ENCODE measurements at regions of chr14 and their contacts with region 1.

Region 1: DNA sequence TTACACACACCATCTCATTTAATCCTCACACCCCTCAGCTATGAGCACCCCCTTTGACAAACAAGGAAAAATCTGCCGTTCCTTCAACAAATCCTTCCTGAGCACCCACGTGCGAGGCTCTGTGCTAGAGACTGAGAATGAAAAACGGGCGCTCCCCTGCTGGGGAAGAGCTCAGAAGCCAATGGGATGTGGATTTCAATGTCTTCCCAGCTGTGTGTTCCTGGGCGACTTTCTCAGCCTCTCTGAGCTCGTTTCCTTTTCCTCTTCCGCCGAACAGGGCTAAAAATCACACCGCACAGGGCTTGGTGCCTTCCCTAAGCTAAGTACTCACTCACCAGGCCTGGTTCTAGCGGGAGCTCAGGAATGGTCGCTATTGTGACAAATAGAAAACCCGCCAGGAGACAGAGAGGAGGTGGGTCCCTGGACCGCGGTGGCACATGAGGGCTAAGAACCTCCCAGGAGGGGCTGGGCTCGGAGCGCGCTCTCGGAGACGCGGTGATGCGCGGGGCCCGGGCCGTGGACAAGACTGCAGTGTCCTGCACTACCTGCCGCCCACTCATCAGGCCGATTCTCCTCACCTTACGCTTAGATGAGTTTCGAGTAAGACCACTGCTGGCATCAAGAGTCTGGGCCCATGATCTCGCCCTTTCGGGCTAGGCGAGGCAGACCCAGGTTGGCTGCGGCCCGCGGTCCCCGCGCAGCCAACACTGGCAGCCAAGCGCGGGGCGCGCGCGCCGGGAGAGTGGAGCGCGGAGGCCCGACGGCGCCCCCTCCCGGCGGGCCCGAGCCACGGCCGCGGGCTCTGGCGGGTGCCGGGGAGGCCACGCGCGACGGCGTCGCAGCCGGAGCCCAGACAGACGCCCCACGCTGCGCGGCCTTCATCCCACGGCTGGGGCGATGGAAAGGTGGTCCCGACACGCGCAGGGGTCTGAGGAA is 17.0 kb downstream of the ZDHHC22 start:
- DNase-seq: peak; percentile 61
- ATAC-seq: peak; percentile 75
- H3K4me3 Mint-ChIP-seq: peak overlapping the region; percentile 69
- H3K27ac Mint-ChIP-seq: peak overlapping the region; percentile 58
- H3K4me1 Mint-ChIP-seq: peaks cover 36% of the 10 kb centered on the region
- H3K27me3 Mint-ChIP-seq: peaks cover 21% of the 10 kb centered on the region
- CTCF ChIP-seq: peak; percentile 81

Region 2: GRCh38 chr14:77097700-77098528 is 26.7 kb before region 1 on chr14 and contains the start of gene CIPC:
- CTCF ChIA-PET with region 1: interaction called, 93 read pairs
- POLR2A ChIA-PET with region 1: interaction called, 10 read pairs
- intact Hi-C with region 1: no loop called
- DNase-seq: peak; percentile 99
- ATAC-seq: peak; percentile 94
- H3K4me3 Mint-ChIP-seq: peak within 1 kb of the TSS; percentile 93
- H3K27ac Mint-ChIP-seq: peak within 1 kb of the TSS; percentile 99
- H3K4me1 Mint-ChIP-seq: peaks cover 35% of the 10 kb centered on the region
- H3K27me3 Mint-ChIP-seq: no peaks in the 10 kb centered on the region
- CTCF ChIP-seq: no peak
- total RNA-seq, gene CIPC: 8.8 to 9.6 TPM

Region 3: GRCh38 chr14:77111043-77111442 is 13.6 kb before region 1 on chr14:
- CTCF ChIA-PET with region 1: interaction called, 23 read pairs
- POLR2A ChIA-PET with region 1: interaction called, 5 read pairs
- intact Hi-C with region 1: no loop called
- DNase-seq: no peak
- ATAC-seq: no peak
- H3K4me3 Mint-ChIP-seq: no peak overlapping the region
- H3K27ac Mint-ChIP-seq: no peak overlapping the region
- H3K4me1 Mint-ChIP-seq: no peaks in the 10 kb centered on the region
- H3K27me3 Mint-ChIP-seq: no peaks in the 10 kb centered on the region
- CTCF ChIP-seq: no peak